ENCODE measurements at regions of chr6 and their contacts with region 1.

Region 1: GRCh38 chr6:19268115-19268514 is 569.1 kb upstream of the ID4 start:
- DNase-seq: peak; percentile 40 to 95
- H3K4me3 ChIP-seq: no peak overlapping the region
- H3K27ac ChIP-seq: peak overlapping the region; percentile 51
- H3K4me1 ChIP-seq: peaks cover 30% of the 10 kb centered on the region
- H3K27me3 ChIP-seq: no peaks in the 10 kb centered on the region
- CTCF ChIP-seq: no peak

Region 2: DNA sequence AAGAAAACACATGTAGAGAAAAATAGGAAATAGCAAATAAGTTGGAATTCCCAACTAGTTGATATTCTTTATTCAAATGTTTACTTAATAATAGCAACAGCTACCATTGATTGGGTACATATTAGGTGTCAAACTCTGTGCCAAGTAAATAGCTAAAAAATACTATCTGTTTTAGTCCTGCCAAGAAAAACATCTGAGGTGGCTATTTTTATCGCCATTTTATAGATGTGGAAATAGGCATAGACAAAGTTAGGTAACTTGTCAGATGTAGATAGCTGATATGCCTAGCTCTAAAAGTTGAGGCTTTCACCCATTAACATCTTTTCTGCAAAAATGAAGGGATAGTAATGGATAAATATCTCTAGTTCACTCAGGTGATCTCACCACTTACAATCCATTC is 19.8 kb after region 1 on chr6:
- CTCF ChIA-PET with region 1: no interaction called
- POLR2A ChIA-PET with region 1: interaction called, 16 read pairs
- intact Hi-C with region 1: no loop called
- DNase-seq: no peak
- H3K4me3 ChIP-seq: no peak overlapping the region
- H3K27ac ChIP-seq: no peak overlapping the region
- H3K4me1 ChIP-seq: peaks cover 20% of the 10 kb centered on the region
- H3K27me3 ChIP-seq: no peaks in the 10 kb centered on the region
- CTCF ChIP-seq: no peak

Region 3: DNA sequence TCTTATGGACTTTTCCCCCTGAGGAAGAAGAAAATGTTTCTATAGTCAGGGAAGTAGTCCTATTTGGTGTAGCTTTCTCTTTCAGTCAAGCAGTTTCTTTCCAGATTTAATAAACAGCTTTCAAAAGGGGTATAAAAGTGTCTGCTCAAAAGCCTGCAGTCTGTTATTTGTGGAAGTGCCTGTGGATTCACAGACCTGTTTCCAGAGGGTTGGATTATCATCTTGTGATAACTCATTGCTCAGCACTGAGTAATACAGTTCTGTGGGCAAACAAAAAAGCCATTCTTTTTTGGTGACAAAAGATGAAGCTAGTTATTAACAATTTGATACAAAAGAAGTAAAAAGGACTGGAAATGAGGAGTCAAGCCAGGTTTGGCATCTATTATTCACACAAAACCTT is 210.9 kb after region 1 on chr6:
- CTCF ChIA-PET with region 1: no interaction called
- POLR2A ChIA-PET with region 1: interaction called, 5 read pairs
- intact Hi-C with region 1: loop called (anchors 1 kb)
- DNase-seq: peak in 1 of 2 experiments; percentile 44
- H3K4me3 ChIP-seq: no peak overlapping the region
- H3K27ac ChIP-seq: no peak overlapping the region
- H3K4me1 ChIP-seq: peaks cover 32% of the 10 kb centered on the region
- H3K27me3 ChIP-seq: no peaks in the 10 kb centered on the region
- CTCF ChIP-seq: no peak

Region 4: GRCh38 chr6:19836799-19837510 is 568.8 kb after region 1 on chr6 and contains the start of gene ID4:
- CTCF ChIA-PET with region 1: no interaction called
- POLR2A ChIA-PET with region 1: no interaction called
- intact Hi-C with region 1: loop called (anchors 10 kb)
- DNase-seq: peak in 1 of 2 experiments; percentile 83
- H3K4me3 ChIP-seq: peak within 1 kb of the TSS; percentile 66
- H3K27ac ChIP-seq: no peak within 1 kb of the TSS
- H3K4me1 ChIP-seq: peaks cover 13% of the 10 kb centered on the region
- H3K27me3 ChIP-seq: peaks cover 17% of the 10 kb centered on the region
- CTCF ChIP-seq: no peak
- total RNA-seq, gene ID4: 4.4 and 5.9 TPM in 2 replicates

Measured in PC-9 (cell line).